ENCODE measurements at regions of chr6 and their contacts with region 1.

Region 1: GRCh38 chr6:3929281-3929798 is 80.2 kb downstream of the FAM50B start:
- DNase-seq: no peak
- H3K4me3 ChIP-seq: no peak overlapping the region
- H3K27ac ChIP-seq: no peak overlapping the region
- H3K4me1 ChIP-seq: no peaks in the 10 kb centered on the region
- H3K27me3 ChIP-seq: no peaks in the 10 kb centered on the region
- CTCF ChIP-seq: no peak

Region 2: DNA sequence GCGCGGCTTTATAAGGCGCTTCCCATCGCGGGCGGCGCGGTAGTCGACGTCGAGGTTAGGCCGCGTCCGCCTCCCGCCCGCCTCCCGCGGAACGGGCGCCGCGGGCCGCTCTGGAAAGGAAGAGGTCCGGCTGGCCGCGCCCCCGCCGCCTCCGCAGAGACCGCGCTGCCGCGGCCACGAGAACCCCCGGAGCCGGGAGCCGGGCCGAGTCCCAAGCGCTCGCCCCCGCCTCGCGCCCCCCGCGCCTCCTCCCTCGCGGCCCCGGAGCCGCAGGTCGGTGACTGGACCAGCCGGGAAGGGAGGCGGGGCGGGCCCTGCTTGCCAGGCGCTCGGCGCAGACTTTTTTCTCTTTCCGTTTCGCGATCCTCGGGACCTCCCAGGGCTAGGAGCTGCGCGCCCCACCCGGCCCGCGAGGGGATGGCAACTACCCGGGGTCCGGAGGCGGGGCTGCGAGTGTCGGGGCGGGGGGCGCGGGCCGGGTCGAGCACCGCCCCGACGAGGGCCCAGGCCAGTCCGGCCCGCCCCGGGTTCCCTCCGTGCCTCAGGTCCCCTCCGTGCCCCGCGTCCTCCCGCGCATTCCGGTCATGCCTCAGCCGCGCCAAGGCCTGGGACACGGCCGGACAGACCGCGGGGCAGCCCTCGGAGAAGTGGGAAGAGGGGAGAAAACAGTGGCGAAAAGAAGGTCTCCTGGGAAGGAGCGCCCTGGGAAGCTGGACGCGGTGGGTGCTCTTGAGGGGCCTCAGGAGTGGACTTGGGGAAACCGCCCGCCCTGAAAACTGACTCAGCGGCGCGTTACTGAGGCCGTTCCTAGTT is 177.4 kb before region 1 on chr6:
- CTCF ChIA-PET with region 1: no interaction called
- dilution Hi-C with region 1: no loop called
- in situ Hi-C with region 1: loop called in 1 of 2 experiments (anchors 10 kb)
- intact Hi-C with region 1: loop called (anchors 1 kb)
- DNase-seq: peak; percentile 78
- H3K4me3 ChIP-seq: peak overlapping the region; percentile 75 to 94 (median 93)
- H3K27ac ChIP-seq: peak overlapping the region; percentile 64
- H3K4me1 ChIP-seq: peaks cover 30% of the 10 kb centered on the region
- H3K27me3 ChIP-seq: no peaks in the 10 kb centered on the region
- CTCF ChIP-seq: no peak

Region 3: DNA sequence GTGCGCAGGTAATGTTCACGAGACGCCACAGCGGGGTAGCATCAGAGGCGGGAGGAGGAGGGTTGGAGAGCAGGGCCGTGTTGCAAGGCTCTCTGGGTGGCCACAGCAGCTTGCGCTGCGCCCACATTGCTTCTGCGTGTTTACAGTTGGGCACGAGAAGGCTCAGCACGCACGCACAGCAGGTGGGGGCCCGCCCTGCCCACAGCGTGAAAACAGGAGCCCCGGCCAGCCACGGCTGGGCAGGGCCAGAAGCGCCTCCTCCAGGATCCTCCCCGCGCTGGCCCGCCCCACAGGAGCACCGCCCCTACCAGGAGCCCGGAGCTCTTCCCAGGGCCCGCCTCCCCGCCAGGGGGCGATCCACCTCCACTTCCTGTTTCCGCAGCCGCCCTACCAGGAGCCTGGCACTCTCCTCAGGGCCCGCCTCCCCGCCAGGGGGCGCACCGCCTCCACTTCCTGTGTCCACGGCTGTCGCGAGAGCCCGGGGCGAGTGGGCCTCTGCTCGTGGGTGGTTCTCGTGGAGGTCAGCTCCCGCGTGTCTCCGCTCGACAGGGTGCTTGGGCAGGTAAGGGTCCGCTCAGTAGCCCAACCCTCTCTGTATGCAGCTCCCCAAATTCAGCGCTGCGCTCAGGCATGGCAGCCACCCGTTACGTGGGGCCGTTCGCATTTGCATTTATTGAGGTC is 80.3 kb before region 1 on chr6 and contains the start of gene FAM50B:
- CTCF ChIA-PET with region 1: interaction called, 17 read pairs
- dilution Hi-C with region 1: no loop called
- in situ Hi-C with region 1: no loop called
- intact Hi-C with region 1: loop called (anchors 1 kb)
- DNase-seq: peak; percentile 81
- H3K4me3 ChIP-seq: peak within 1 kb of the TSS; percentile 44 to 62 (median 59)
- H3K27ac ChIP-seq: peak within 1 kb of the TSS; percentile 87
- H3K4me1 ChIP-seq: peaks cover 12% of the 10 kb centered on the region
- H3K27me3 ChIP-seq: no peaks in the 10 kb centered on the region
- CTCF ChIP-seq: peak; percentile 48 to 91
- total RNA-seq, gene FAM50B: 4.4 to 7.3 TPM

Region 4: GRCh38 chr6:3977875-3978711 is 48.8 kb after region 1 on chr6:
- CTCF ChIA-PET with region 1: no interaction called
- dilution Hi-C with region 1: no loop called
- in situ Hi-C with region 1: no loop called
- intact Hi-C with region 1: loop called (anchors 1 kb)
- DNase-seq: peak; percentile 56
- H3K4me3 ChIP-seq: no peak overlapping the region
- H3K27ac ChIP-seq: no peak overlapping the region
- H3K4me1 ChIP-seq: no peaks in the 10 kb centered on the region
- H3K27me3 ChIP-seq: no peaks in the 10 kb centered on the region
- CTCF ChIP-seq: peak; percentile 50 to 59

Region 5: GRCh38 chr6:4008324-4009047 is 79.1 kb after region 1 on chr6:
- CTCF ChIA-PET with region 1: no interaction called
- dilution Hi-C with region 1: no loop called
- in situ Hi-C with region 1: no loop called
- intact Hi-C with region 1: loop called (anchors 1 kb)
- DNase-seq: peak; percentile 63
- H3K4me3 ChIP-seq: no peak overlapping the region
- H3K27ac ChIP-seq: peak overlapping the region; percentile 18
- H3K4me1 ChIP-seq: peaks cover 7% of the 10 kb centered on the region
- H3K27me3 ChIP-seq: no peaks in the 10 kb centered on the region
- CTCF ChIP-seq: peak; percentile 56 to 66